ENCODE measurements at regions of chr4 and their contacts with region 1.

Region 1: DNA sequence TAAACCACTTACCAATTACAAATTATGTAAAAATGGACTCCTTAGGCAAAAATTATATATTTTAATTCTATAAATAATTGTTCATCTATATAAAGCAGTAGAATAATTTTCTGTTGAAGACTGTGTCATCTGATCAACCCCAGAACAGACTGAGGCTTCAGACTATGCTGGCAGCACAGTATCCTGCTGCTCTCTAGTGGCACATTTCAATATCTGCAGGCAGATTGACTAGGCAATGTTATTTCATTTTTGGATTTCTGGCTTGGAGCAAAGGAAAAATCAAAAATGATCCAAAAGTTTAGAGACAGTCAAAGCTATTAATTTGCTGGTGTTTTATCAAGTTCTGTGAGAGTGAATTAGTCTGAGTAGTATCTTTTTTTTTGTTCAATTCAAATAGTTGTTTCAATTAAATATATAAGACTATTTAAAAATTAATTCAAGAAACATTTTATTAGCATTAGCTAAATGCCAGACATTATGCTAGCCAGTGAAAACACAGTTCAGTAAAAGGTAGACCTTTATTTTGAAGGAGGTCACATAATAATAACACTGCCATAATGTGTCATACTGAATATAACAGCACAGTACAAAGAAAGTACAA is 21.3 kb upstream of the SULT1E1 start:
- DNase-seq: peak in 30 of 42 donors; percentile 10 to 70 (median 31)

Region 2: DNA sequence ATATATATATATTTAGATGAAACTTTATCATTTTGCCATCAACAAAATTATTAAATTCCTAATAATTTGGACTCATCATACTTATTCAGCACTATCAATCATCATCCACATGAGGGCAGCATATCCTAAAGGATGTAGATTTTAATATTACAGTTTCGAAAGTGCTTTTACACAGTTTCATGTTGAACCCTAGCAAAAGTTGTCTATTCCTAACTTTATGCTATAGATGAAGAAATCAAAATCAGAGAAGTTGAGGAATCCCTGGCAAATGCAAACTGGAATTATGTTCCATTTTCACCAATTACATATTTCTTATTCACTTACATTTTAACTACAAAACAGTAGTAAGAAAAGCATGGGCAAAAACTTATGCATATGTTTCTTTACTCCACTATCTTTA is 191.7 kb before region 1 on chr4:
- intact Hi-C with region 1: loop called (anchors 5 kb)
- DNase-seq: peak in 1 of 42 donors; percentile 19